ENCODE measurements at regions of chr1 and their contacts with region 1.

Region 1: DNA sequence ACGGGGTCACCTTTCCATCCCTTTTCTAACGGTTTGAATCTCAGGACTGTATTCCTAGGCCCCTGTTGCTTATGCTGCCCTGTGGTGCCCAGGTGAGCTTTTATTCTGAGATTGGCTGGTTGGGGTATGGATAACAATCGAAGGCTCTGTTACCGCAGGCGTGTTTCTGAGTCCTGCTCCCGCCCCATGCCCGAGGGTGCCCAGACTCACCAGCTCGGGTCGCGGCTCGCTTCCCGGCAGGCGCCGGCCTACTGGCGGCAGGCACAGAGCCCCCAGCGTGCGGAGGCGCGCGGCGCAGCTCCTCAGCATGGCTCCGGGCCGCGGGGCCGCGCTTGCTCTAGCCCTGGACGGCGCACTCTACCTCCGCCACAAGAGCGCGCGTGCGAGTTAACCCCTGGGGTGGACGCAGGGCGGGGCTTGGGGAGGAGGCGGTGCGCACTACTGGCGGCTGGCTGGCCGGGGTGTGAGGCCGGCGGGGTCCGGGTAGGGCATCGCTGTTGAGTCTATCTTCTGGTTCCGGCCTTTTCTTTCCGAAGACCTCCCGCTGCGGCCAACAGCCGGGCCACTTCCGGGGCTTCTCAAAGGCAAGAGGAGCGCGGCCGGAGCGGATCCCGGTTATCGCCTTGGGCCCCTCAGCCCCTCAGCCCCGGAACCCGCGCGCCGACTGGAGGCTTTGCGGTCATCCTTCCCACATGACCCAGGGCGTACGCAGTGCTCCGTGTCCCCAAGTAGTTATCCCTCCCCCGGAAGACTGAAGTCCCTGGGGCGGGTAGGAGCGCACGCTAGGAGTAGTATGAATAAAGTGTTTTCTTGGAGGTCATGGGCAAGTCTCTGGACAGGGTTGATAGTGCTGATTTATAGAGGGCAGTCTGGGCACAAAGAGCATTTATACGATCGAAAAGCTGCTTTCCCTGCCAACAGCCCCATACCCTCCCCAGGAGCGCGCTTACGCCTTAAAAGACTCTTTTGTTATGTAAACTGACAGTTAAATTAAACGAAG is at the start of gene THEM4:
- DNase-seq: peak; percentile 74
- H3K4me3 ChIP-seq: peak within 1 kb of the TSS; percentile 77
- H3K27me3 ChIP-seq: no peaks in the 10 kb centered on the region
- CTCF ChIP-seq: no peak; the same call in 1 of the 2 replicates
- polyA plus RNA-seq, gene THEM4: 11.7 and 17.2 TPM in 2 replicates

Region 2: GRCh38 chr1:151763990-151764389 is 145.5 kb before region 1 on chr1:
- CTCF ChIA-PET with region 1: no interaction called
- POLR2A ChIA-PET with region 1: no interaction called
- DNase-seq: no peak
- H3K4me3 ChIP-seq: peak overlapping the region; percentile 89
- H3K27me3 ChIP-seq: no peaks in the 10 kb centered on the region
- CTCF ChIP-seq: no peak

Region 3: DNA sequence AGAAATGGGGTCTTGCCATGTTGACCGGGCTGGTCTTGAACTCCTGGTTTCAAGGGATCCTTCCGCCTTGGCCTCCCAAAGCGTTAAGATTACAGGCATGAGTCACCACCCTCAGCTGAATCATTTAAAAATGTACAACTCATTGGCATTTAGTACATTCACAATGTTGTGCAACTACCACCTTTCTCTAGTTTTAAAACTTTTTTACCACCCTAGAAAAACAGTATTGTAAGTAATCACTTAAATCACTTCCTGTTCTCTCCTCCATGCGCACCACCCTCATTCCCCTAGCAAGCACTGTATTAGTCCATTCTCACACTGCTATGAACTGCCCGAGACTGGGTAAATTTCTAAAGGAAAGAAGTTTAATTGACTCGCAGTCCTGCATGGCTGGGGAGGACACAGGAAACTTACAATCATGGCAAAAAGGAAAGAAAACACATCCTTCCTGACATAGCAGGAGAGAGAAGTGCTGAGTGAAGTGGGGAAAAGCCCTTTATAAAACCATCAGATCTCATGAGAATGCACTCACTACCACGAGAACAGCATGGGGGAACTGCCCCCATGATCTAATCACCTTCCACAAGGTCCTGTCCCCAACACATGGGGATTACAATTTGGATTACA is 41.6 kb before region 1 on chr1:
- CTCF ChIA-PET with region 1: no interaction called
- POLR2A ChIA-PET with region 1: no interaction called
- DNase-seq: no peak
- H3K4me3 ChIP-seq: no peak overlapping the region
- H3K27me3 ChIP-seq: peaks cover 2% of the 10 kb centered on the region; the same call in 1 of the 2 replicates
- CTCF ChIP-seq: no peak

Region 4: DNA sequence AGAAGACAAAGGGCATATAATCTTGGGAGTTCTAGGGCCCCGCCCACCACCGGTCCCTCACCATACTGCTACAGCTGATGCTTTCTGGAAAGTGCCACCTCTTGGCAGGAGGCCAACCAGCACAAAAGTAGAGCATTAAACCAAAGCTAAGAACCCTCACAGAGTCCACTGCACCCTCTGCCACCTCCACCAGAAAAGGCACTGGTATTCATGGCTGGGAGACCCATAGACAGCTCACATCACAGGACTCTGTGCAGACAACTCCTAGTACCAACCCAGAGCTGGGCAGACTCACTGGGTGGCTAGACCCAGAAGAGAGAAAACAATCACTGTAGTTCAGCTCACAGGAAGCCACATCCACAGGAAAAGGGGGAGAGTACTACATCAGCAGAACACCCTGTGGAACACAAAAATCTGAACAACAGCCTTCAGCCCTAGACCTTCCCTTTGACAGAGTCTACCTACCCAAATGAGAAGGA is 10.9 kb before region 1 on chr1:
- CTCF ChIA-PET with region 1: interaction called, 13 read pairs
- POLR2A ChIA-PET with region 1: no interaction called
- DNase-seq: no peak
- H3K4me3 ChIP-seq: no peak overlapping the region
- H3K27me3 ChIP-seq: no peaks in the 10 kb centered on the region
- CTCF ChIP-seq: no peak